ENCODE measurements at regions of chr11 and their contacts with region 1.

Region 1: DNA sequence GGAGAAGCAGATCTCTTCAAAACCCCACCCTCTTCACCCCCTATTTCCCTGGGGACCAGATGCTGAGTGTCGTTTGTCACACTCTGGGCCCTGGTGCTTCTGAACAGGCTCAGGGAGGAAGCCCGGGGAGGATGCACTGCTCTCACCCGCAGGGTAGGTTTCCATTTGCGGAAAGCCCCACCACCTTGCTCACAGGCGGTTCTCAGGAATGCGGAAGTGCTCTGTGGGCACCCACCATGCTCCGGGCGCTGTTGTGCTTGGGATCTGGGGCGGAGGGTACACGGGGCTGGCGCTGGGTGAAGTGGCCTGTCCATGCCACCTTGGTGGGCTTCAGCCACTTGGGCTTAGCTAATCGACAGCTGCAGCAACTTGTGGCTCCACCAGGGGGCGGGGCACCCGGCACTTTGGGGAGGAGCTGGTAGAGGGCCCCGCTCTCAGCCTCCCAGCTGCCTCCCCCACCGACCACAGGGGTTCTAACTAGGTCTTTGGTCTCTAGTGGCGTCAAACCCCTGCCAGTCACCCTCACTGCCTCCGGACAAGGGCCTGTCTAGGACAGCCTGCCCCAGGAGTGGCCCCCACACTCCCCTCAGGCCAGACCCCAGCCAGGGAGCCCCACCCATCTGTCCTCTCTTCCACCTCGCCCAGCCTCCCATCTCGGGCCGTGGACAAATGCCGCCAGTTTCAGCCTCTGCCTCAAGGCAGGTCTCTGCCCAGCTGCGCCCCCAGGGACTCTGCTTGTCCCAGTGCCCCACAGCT is 7.4 kb downstream of the NDUFV1 start:
- DNase-seq: peak in 1 of 2 donors; percentile 94
- H3K4me3 ChIP-seq: peak overlapping the region; percentile 28 to 48
- H3K27ac ChIP-seq: peak overlapping the region; percentile 58
- H3K4me1 ChIP-seq: peaks cover 15% of the 10 kb centered on the region
- H3K27me3 ChIP-seq: no peaks in the 10 kb centered on the region
- CTCF ChIP-seq: peak; percentile 34 to 56 (median 52)
- POLR2A ChIP-seq: no peak

Region 2: GRCh38 chr11:67401495-67402191 is 212.5 kb before region 1 on chr11 and contains the start of gene PPP1CA:
- intact Hi-C with region 1: loop called (anchors 10 kb)
- DNase-seq: no peak
- H3K4me3 ChIP-seq: peak within 1 kb of the TSS; percentile 80 to 91
- H3K27ac ChIP-seq: peak within 1 kb of the TSS; percentile 94
- H3K4me1 ChIP-seq: peaks cover 49% of the 10 kb centered on the region
- H3K27me3 ChIP-seq: no peaks in the 10 kb centered on the region
- CTCF ChIP-seq: no peak
- POLR2A ChIP-seq: peak in 1 of 2 donors; percentile 55
- total RNA-seq, gene PPP1CA: 102 TPM

Region 3: DNA sequence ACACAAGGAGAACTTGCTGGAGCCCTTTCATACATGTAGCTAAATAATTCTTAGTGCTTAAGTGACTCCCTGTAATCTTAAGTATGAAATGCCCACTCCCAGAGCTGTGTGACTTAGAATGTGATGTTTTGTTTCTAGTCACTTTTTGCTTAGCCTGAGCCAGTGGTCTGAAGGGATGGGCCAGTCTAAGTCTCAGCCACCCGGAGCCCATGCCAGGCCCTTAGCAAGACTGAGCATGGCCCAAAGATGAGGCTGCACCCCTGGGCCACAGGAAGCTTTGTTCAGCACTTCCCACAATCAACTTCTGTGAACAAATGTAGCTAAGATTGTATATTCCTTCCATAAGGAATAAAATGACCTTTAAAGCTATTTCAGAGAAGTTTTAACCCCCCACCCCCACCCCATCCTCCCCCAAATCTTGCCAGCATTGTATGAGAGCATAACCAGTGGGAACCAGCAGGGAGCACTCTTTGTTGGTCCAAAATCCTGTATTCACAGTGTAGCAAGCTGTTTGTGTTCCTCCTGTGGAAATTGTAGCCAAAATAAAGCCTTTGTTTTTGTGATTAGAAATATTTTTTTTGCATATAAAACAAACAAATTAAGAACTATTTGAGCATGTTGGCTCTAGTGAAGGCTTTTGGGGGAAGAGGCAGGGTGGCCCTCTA is 996.4 kb after region 1 on chr11:
- intact Hi-C with region 1: no loop called
- DNase-seq: no peak
- H3K4me3 ChIP-seq: no peak overlapping the region
- H3K27ac ChIP-seq: no peak overlapping the region
- H3K4me1 ChIP-seq: no peaks in the 10 kb centered on the region
- H3K27me3 ChIP-seq: no peaks in the 10 kb centered on the region
- CTCF ChIP-seq: no peak
- POLR2A ChIP-seq: no peak

Measured in vagina (tissue), 2 donors.